ENCODE measurements at regions of chr1 and their contacts with region 1.

Region 1: DNA sequence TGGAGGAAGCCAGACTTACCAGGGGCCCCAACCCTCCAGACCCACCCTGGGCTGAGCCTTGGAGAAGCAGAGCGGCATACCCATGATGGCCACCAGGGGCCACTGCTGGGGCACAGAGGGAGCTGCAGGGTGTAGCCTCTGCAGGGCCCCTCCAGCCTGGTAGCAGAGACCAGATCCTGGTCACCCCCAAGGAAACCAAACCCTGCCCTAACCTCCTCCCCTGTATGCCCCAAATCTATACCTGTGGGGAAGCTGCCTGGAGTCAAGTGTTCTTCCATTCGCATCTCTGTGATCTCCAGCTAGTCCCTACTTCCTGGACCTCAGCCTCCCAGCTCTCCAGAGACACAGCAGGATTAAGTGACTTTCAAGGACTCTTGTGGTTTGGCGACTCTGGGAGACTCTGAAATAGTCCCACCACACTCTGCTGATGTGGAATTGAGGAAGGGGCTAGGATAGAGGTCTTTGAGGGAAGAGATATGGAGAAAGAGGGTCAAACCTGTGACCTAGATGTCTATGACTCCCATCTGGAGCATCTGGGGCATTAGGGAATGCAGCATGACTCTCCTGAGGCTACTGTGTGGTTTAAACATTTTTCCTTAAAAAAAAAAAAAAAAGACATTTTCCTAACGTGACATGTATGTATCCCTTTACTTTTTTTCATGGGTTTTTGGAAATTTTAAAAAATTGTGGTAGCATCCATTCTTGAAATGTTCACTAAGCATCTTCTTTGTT is 119.2 kb upstream of the IPO9 start:
- DNase-seq: peak in 1 of 2 donors; percentile 95
- H3K4me3 ChIP-seq: no peak overlapping the region
- CTCF ChIP-seq: peak in 1 of 3 donors; percentile 87
- POLR2A ChIP-seq: no peak

Region 2: GRCh38 chr1:201539561-201540354 is 170.0 kb before region 1 on chr1:
- intact Hi-C with region 1: loop called (anchors 5 kb)
- DNase-seq: peak; percentile 62 to 95
- H3K4me3 ChIP-seq: peak overlapping the region; percentile 52
- CTCF ChIP-seq: no peak
- POLR2A ChIP-seq: no peak

Region 3: DNA sequence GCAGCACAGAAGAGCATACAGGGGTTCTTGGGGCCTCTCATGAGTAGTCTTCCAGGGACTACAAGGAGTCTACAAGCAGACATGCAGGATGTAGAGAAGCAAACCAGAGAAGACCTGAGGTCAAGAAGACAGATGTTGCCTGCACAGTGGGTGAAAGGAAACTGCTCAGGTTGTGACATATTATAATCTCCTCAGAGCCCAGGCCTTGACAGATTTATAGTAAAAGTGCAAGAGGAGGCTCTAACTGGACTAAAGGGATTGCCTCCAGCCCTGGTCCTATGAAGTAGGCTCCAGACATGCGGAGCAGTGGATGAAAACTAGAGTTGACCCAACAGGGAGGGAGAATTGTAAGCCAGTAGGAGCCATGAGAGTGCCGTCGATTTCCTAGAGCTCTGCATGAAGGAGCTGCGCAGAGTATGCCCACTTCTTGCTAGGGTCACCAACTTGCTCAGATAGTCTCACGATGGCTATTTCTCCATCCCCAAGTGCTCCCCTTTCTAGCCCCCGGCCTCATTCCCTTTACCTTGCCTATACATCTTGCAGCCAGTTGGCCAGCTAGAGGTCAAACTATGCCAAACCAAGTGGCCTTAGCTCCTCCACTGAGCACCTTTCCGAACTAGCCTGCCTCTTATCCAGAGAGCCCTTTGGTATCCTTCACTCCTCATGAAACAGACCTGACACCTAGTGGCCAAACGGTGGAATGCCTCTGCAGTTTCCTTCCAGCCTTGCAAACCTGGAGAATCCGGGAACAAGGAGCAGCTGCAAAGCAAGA is 83.0 kb after region 1 on chr1:
- intact Hi-C with region 1: loop called (anchors 2 kb)
- DNase-seq: peak; percentile 86 to 94
- H3K4me3 ChIP-seq: no peak overlapping the region
- CTCF ChIP-seq: peak in 1 of 3 donors; percentile 91
- POLR2A ChIP-seq: no peak